ENCODE measurements at regions of chr19 and their contacts with region 1.

Region 1: DNA sequence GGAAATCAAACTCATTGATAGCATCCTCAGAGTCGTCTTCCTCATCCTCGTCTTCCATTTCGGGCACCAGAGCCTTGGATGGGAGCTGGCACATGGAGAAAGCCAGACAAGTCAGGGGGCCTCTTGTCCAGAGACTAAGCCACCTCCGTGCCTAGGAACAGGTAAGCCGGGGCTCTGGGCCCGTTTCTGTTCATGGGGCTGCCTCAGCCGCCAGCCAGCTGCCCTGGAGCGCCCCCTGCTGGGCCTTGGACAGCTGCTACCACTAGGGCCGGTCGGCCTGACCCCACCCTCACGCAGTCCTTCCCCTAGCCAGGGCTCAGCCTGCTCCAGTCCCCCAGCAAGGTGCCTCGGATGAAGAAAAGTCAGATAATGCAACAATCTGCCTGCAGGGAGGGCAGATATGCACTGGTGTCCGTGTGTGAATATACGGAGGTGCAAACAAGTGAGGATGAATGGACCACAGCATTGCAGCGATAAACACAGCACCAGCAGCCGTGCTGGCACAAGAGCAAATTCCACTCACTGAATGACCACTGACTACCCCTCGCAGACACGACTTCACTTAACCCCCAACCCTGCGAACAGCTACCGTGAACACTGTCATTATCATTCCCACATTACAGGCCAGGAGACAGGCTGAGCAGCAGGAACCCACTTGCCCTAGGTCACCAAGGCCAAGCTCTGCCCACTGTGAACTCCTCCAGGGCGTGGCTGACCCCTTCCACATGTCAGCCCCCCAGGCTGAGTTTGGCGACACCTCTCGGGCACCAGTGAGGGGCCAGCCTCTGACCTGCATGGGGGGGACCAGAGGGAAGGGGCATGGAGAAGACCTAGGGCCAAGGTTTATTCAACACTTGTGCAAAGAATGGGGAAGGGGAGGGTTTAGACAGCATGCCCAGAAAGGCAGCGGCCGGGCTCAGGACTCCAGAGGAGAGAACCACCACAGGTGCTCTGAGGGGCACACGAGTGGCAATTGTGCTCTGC is 12.1 kb upstream of the PRKD2 start:
- H3K4me3 ChIP-seq: no peak overlapping the region
- H3K27ac ChIP-seq: no peak overlapping the region
- H3K4me1 ChIP-seq: no peaks in the 10 kb centered on the region; the same call in 1 of the 2 replicates
- CTCF ChIP-seq: peak; percentile 86

Region 2: GRCh38 chr19:46634045-46634655 is 94.8 kb before region 1 on chr19:
- CTCF ChIA-PET with region 1: interaction called, 10 read pairs
- POLR2A ChIA-PET with region 1: no interaction called
- H3K4me3 ChIP-seq: peak overlapping the region; percentile 33
- H3K27ac ChIP-seq: no peak overlapping the region
- H3K4me1 ChIP-seq: peaks cover 3% of the 10 kb centered on the region; the same call in 1 of the 2 replicates
- CTCF ChIP-seq: no peak

Region 3: DNA sequence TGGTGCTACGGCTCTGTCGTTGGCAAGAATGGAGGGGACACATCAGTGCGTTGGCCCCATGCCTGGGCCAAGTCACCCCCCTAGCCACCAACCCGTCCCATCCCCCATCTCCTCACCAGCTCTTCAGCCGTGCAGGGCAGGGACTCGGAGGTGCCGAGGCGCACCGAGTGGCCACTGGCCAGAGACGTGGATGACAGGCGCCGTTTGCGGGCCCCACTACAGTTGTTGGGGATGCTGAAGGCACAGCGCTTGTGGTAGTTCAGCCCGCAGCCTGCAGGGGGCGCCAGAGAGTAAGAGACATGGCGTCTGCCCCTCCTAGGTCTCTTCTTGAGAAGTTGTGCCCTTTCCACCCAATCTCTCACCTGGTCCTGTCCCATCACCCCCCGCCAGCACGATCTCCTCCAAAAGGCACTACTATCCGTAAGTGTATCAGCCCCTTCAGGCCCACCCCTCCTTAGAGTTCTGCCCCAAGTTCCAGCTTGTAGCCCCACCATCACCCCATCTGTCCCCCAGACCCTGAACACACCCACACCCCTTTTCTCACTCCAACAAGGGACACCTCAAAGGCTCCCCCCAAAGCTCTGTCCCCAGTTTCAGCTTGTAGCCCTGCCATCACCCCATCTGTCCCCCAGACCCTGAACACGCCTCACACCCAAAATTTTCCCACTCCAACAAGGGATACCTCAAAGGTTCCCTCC is 24.5 kb before region 1 on chr19:
- CTCF ChIA-PET with region 1: interaction called, 69 read pairs
- POLR2A ChIA-PET with region 1: interaction called, 6 read pairs
- H3K4me3 ChIP-seq: no peak overlapping the region
- H3K27ac ChIP-seq: no peak overlapping the region
- H3K4me1 ChIP-seq: no peaks in the 10 kb centered on the region
- CTCF ChIP-seq: peak; percentile 91

Region 4: GRCh38 chr19:46713781-46714443 is 15.1 kb before region 1 on chr19:
- CTCF ChIA-PET with region 1: interaction called, 28 read pairs
- POLR2A ChIA-PET with region 1: interaction called, 4 read pairs
- H3K4me3 ChIP-seq: peak overlapping the region; percentile 40
- H3K27ac ChIP-seq: no peak overlapping the region
- H3K4me1 ChIP-seq: peaks cover 15% of the 10 kb centered on the region
- CTCF ChIP-seq: no peak

Region 5: GRCh38 chr19:46741447-46741846 is 12.5 kb after region 1 on chr19:
- CTCF ChIA-PET with region 1: interaction called, 17 read pairs
- POLR2A ChIA-PET with region 1: interaction called, 3 read pairs
- H3K4me3 ChIP-seq: no peak overlapping the region
- H3K27ac ChIP-seq: no peak overlapping the region
- H3K4me1 ChIP-seq: peaks cover 3% of the 10 kb centered on the region; the same call in 1 of the 2 replicates
- CTCF ChIP-seq: no peak

Region 6: GRCh38 chr19:46746281-46747013 is 17.5 kb after region 1 on chr19 and contains the start of gene STRN4:
- CTCF ChIA-PET with region 1: interaction called, 17 read pairs
- POLR2A ChIA-PET with region 1: no interaction called
- H3K4me3 ChIP-seq: peak within 1 kb of the TSS; percentile 70
- H3K27ac ChIP-seq: peak within 1 kb of the TSS; percentile 99
- H3K4me1 ChIP-seq: peaks cover 6% of the 10 kb centered on the region
- CTCF ChIP-seq: no peak

Region 7: DNA sequence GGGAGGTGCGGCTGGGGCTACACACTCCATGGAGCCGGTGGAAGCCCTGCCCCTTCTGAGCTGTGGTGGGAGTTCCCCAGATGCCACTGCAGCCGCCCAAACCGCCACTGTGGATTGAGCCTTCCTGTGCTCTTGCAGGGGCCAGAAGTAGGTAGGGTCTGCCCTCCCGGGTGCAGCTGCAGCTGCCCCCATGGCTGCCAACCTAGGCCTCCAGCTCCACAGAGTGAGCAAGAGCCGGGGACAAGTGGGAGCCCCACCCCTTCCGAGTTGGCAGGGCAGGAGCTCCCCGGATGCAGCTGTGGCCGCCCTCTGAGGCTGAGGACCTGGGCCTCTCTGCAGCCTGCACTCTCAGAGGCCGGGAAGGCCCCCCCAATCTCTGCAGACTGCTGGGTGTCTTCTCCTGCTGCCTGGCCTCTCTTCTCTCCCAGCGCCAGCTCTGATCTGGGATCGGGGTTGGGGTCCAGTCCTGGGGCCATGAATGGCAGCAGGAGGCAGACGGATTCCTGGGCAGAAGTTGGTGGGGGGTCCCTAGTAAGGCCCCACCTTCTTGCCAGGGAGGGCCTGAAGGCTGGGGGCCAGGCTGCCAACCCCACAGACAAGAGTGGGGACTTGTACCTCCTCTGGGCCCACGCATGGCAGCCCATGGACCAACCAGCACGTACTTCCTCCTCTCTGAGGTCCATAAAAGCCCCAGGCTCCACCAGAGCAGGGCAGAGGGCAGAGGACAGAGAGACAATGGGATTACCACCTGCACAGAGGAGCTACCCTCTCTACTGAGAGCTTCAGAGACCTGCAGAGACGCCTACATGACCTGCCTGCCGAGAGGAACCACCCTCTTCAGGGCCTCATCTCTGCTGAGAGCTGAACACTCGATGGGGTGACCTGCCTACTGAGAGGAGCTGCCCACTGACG is 92.8 kb after region 1 on chr19:
- CTCF ChIA-PET with region 1: no interaction called
- POLR2A ChIA-PET with region 1: no interaction called
- H3K4me3 ChIP-seq: no peak overlapping the region
- H3K27ac ChIP-seq: no peak overlapping the region
- H3K4me1 ChIP-seq: peaks cover 7% of the 10 kb centered on the region
- CTCF ChIP-seq: no peak

Measured in HEK293 (cell line).